Activated CD4-positive, alpha-beta T cell treated with anti-CD3 and anti-CD28 coated beads for 36 hours (primary cell): ENCODE measurements at regions of chr19 and their contacts with region 1.

Region 1: GRCh38 chr19:39397360-39398296 is 6.5 kb downstream of the MED29 start:
- DNase-seq: peak; percentile 97
- ATAC-seq: peak; percentile 58
- H3K4me3 Mint-ChIP-seq: peak overlapping the region; percentile 52
- H3K27ac Mint-ChIP-seq: peak overlapping the region; percentile 97
- H3K4me1 Mint-ChIP-seq: peaks cover 59% of the 10 kb centered on the region
- H3K27me3 Mint-ChIP-seq: no peaks in the 10 kb centered on the region

Region 2: DNA sequence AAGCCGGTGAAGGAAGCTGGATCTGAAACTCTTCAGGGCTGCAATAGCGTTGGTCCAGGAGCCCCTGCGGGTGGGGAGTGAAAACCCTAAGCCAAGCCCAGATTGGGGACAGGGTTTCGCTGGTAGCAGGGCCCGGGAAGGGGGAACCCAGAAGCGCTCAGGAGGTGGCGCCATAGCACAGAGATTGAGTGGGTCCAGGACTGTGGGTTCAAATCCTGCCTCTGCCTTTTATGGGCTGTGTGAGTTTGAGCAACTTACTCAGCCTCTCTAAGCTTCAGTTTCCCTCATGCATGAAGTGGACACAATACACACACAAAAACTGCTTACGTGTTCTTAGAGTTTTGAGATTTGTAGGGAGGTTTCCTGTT is 185.3 kb before region 1 on chr19:
- CTCF ChIA-PET with region 1: interaction called, 6 read pairs
- POLR2A ChIA-PET with region 1: no interaction called
- intact Hi-C with region 1: loop called in 1 of 2 experiments (anchors 5 kb)
- DNase-seq: peak; percentile 86
- ATAC-seq: peak; percentile 100
- H3K4me3 Mint-ChIP-seq: no peak overlapping the region
- H3K27ac Mint-ChIP-seq: no peak overlapping the region
- H3K4me1 Mint-ChIP-seq: no peaks in the 10 kb centered on the region
- H3K27me3 Mint-ChIP-seq: peaks cover 9% of the 10 kb centered on the region

Region 3: DNA sequence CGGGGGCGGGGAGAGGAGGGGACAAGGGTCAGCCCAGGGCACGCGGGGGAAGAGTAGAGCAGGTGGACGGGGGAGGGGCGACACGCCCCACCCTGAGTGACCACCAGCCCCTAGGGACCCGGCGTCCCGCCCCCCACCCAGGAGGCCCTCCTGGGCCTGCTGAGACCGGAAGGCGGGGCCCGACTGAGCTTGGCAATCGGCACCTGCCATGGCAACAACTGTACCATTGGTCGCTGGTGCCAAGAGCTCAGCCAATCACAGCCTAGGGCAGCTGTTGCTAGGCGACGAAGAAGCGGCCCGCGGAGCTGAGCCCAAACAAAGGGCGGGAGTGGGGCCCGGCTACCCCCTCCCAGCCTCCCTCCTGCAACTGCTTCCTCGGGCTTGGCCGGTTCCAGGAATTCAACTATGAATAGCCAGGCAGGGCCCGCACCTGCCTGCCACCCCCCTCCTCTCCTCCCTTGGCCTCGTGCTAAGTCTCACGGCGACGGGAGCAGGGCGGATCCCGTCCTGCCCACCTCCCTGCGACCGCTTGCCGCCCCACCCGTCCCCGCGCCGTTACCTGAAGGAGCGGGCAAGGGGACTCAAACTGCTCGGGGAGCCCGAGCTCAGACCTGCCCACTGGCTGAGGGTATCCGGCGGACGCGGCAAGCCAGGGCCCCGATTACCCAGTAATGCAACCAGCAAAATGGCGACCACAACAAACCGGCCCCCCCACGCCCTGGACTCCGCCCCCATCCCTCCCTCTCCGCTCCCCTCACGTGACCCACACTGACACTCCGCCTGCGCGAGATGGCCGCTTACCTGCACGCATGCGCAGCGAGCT is 436.0 kb after region 1 on chr19 and contains the start of gene DYRK1B:
- CTCF ChIA-PET with region 1: no interaction called
- POLR2A ChIA-PET with region 1: no interaction called
- intact Hi-C with region 1: loop called in 1 of 2 experiments (anchors 5 kb)
- DNase-seq: peak; percentile 99
- ATAC-seq: peak; percentile 92
- H3K4me3 Mint-ChIP-seq: peak within 1 kb of the TSS; percentile 64
- H3K27ac Mint-ChIP-seq: peak within 1 kb of the TSS; percentile 84
- H3K4me1 Mint-ChIP-seq: peaks cover 25% of the 10 kb centered on the region
- H3K27me3 Mint-ChIP-seq: no peaks in the 10 kb centered on the region
- total RNA-seq, gene DYRK1B: 4.8 to 6.9 TPM